ENCODE measurements at regions of chr9 and their contacts with region 1.

Region 1: DNA sequence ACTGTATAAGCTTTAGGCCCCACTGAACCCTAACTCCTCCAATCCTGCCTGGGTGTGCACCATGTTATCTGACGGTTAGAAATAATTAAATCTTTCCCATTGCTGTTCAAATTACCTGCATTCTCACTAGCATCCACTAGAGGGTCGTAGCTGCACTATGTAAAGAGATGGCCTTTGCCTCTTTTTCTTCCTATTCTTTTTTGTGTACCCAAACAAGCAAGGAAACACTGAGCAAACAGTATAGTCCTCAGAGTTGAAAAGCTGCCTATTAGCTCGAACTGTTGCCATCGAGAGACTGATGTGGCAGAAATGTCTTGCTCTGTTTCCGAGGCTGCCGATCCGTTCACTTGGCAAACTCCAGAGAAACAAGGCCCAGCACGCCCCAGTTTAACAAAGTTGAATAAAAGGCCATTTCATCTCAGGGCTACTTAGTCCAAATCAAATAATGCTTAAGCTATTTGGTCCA is 163.8 kb upstream of the TRPM3 start:
- DNase-seq: peak; percentile 34
- CTCF ChIP-seq: peak; percentile 67

Region 2: DNA sequence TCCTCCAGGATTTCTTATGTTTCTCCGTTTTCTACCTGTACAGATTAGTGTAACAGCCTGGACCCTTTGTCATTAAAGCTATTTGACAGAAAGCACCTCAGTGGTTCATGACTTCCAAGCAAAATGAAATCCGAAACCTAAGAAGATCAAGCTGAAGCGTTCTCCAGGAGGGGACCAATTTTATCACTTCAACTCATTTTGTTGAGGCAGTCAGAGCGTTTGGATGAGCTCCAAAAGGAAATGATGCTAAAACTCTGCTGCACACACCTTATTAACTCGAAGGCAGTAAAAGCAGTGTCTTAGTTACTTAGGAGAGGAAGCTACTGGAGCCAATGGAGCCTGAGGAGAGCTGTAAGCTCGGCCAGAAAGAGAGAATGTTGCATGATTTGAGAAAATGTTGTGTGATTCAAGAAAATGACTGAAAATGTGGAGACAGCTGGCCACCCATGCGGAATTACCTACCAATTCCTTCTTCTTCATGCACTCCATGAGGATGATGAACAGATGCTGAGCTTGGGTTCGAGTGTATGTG is 524.0 kb before region 1 on chr9:
- in situ Hi-C with region 1: no loop called
- DNase-seq: no peak
- CTCF ChIP-seq: no peak

Region 3: DNA sequence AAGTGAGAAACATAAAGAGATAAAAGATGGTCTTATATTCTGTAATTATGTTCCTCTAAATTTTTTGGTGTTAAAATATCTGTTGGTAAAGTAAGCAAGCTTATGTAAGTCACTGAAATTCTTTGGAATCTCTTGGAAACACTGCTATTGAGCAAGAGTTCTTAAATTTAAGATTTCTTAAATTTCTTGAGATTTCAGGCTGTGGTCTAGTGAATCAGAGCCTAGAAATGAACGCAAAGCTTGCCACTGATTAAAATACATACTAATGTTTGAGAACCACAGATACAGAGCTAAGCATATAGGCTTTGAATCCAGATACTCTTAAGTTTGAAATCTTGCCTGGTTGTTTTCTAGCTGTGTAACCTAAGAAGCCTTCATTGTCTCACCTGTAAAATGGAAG is 297.2 kb before region 1 on chr9:
- in situ Hi-C with region 1: no loop called
- DNase-seq: no peak
- CTCF ChIP-seq: no peak

Region 4: GRCh38 chr9:71768388-71769174 is 483.4 kb after region 1 on chr9 and contains the start of gene CEMIP2:
- in situ Hi-C with region 1: loop called (anchors 25 kb)
- DNase-seq: peak; percentile 90
- CTCF ChIP-seq: peak; percentile 73

Region 5: DNA sequence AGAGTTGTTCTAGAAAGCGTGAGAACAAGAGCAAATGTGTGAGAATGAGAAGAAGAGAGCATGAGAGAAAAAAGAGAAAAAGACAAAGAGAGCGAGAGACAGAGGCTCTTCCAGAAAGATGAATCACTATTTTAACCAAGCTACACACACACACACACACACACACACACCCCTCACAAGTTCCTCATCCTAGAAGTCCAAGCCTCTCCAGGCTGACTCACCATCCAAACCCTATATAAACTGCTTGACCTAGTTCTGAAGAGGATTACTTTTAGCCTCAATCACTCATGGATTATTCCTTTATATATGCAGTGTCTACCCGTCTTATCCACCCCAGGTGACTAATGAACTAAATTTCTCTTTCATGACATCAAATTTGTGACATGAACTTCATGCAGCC is 737.6 kb after region 1 on chr9:
- in situ Hi-C with region 1: loop called (anchors 25 kb)
- DNase-seq: no peak
- CTCF ChIP-seq: no peak

Measured in GM13976 (cell line).